Activated T-helper 1 cell treated with anti-CD3 and anti-CD28 coated beads, Interleukin-12 subunit alpha, Interleukin-12 subunit beta, Interleukin-2, Interleukin-4 antibody, amounts not matched to agents 30 ng/mL and 10 ng/mL and 1 ng/mL, durations not matched to agents 14 hours and 24 hours and 36 hours (primary cell): ENCODE measurements at regions of chr18 and their contacts with region 1.

Region 1: GRCh38 chr18:2104620-2105462 is 466.5 kb downstream of the METTL4 start:
- DNase-seq: peak; percentile 22
- H3K4me3 Mint-ChIP-seq: no peak overlapping the region
- H3K27ac Mint-ChIP-seq: no peak overlapping the region
- H3K4me1 Mint-ChIP-seq: no peaks in the 10 kb centered on the region
- H3K27me3 Mint-ChIP-seq: peaks cover 2% of the 10 kb centered on the region

Region 2: DNA sequence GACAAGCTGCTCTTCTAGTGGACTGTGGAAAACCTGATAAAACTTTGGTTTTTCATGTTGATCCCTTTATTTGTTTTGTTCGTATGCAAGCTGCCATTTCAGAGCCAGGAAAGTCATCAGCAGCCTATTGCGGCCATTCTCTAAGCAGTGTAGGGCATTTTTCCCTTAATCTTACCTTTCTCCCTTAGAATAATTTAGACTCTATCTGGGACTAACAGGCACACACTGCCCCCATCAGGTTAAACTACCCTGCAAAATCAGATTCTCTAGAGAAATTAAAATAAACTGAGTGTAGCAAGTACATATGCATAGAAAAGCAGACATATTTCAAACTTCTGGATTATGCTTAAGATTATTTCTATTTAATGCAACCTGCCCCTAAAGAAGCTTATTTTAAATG is 119.0 kb after region 1 on chr18:
- intact Hi-C with region 1: loop called (anchors 2 kb)
- DNase-seq: no peak
- H3K4me3 Mint-ChIP-seq: no peak overlapping the region
- H3K27ac Mint-ChIP-seq: no peak overlapping the region
- H3K4me1 Mint-ChIP-seq: no peaks in the 10 kb centered on the region
- H3K27me3 Mint-ChIP-seq: no peaks in the 10 kb centered on the region

Region 3: DNA sequence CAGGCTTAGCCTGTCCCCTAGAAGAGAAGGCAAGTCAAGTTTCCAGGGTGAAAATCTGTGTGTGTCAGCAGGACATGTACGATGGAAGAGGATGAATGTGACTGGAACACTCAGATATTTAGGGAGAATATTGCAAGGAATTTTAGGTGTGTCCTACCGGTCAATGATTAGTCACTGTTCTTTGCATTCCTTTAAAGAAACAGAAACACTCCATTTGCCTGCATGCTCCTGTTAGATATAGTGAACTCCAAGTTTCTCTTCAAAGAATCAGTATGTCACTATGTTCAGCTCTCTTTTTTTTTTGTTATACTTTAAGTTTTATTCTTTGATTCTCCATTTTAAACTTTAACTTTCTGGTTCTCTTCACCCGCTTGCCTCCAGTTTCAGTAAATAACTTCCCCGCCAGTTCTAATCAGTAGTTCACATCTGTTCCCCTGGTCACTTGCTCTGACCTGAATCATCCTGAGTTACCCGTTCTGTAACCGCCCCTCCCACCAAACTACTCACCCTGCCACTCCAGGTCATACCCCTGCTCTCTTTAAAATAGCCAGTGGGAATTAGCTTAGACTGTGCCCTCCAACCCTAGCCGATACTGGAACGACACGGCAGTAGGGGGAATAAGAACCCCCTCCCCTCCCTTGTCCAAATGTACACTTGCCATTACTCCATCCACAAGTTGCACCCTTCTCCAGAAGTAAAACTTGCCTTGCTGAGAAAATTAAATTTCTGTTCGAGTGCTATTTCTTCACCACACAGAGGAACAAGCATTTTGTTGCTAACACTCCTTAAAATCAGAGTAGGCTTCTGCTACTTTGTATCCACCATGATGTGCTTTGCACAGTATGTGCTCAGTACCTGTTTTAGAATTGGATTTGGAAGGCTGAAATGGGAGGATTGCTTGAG is 198.0 kb after region 1 on chr18:
- intact Hi-C with region 1: no loop called
- DNase-seq: no peak
- H3K4me3 Mint-ChIP-seq: no peak overlapping the region
- H3K27ac Mint-ChIP-seq: no peak overlapping the region
- H3K4me1 Mint-ChIP-seq: no peaks in the 10 kb centered on the region
- H3K27me3 Mint-ChIP-seq: peaks cover 3% of the 10 kb centered on the region